ENCODE measurements at regions of chr22 and their contacts with region 1.

Region 1: DNA sequence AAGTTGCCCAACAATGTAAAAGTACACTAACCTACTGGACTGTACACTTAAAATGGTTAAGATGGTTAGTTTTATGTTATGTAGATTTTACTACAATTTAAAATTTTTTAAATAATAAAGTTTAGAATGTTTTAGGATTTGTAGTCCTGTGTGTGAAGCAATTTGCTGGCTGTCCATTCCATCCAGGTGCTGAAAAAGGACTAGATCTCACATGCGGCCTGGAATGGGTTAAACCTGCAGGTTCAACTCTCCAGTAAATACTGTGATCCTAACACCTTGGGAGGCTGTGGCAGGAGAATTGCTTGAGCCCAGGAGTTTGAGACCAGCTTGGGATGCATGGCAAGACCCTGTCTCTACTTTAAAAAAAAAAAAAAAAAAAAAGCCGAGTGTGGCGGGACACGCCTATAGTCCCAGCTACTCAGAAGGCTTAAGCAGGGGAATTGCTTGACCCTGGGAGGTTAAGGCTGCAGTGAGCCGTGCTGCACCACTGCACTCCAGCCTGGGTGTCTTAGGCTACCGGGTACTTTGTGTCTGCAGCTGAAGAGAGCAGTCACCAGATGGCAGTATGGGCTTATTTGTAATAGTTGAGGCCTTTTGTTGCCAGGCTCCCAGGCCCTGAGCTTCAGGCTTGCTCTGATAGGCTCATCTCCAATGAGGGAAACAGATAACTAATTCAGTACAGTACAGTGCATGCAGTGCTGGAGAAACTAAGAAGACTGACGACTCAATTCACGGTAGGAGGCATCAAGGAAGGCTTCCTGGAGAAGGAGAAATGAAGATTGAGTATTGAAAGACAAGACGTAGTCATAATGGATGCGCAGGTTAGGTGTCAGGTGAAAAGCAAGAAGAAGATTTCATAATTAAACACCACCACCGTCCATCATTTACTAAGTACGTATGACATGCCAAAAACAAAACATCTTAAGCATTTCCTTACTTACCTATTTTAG is 64.7 kb upstream of the ASPHD2 start:
- DNase-seq: peak; percentile 54
- ATAC-seq: peak; percentile 93
- H3K4me3 ChIP-seq: no peak overlapping the region
- H3K27ac ChIP-seq: no peak overlapping the region
- H3K4me1 ChIP-seq: peaks cover 4% of the 10 kb centered on the region
- H3K27me3 ChIP-seq: no peaks in the 10 kb centered on the region; the same call in 1 of the 2 replicates
- CTCF ChIP-seq: peak; percentile 74

Region 2: GRCh38 chr22:26236991-26237390 is 127.3 kb before region 1 on chr22:
- CTCF ChIA-PET with region 1: interaction called, 10 read pairs
- POLR2A ChIA-PET with region 1: no interaction called
- in situ Hi-C with region 1: no loop called
- intact Hi-C with region 1: no loop called
- DNase-seq: no peak
- ATAC-seq: no peak
- H3K4me3 ChIP-seq: no peak overlapping the region
- H3K27ac ChIP-seq: no peak overlapping the region
- H3K4me1 ChIP-seq: no peaks in the 10 kb centered on the region
- H3K27me3 ChIP-seq: peaks cover 4% of the 10 kb centered on the region; the same call in 1 of the 2 replicates
- CTCF ChIP-seq: no peak

Region 3: DNA sequence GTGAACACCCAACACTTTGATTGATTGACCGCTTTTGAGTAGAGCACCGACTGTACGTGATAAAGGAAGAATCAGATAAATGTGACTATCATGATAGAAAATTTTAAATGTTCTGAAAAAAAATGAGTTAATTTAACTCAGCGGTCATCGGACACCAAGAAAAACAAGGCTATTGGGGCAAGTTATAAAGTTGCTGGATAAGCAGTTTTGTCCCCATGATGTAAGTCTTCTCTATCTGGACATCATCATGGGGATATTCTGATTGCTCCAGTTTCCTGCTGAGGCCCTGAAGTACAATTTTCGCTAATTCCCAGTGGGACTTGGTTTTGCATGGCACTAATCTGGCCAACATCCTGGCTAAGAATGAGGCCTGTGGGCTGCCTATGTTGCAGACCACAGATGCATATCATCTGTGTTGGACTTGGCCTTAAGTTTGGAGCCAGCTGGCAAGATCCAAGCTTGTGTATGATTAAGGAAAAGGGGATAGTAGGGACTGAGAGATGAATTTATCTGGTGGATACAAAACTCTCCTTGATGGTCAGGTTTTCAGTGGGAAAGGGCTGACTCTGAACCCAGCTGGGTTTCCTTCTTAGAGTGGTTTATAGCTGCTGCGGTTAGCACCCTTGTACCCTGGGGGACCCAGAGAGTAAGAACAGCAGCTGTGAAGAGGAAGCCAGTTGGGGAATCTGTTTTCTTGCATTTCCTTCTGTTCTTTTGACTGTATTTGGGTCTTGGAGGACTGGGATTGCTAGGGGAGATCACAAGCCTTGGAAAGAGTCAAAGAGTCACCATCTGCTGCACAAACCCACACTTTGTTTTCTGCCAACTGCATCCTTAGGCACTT is 76.7 kb before region 1 on chr22:
- CTCF ChIA-PET with region 1: interaction called, 10 read pairs
- POLR2A ChIA-PET with region 1: no interaction called
- in situ Hi-C with region 1: no loop called
- intact Hi-C with region 1: no loop called
- DNase-seq: no peak
- ATAC-seq: no peak
- H3K4me3 ChIP-seq: no peak overlapping the region
- H3K27ac ChIP-seq: no peak overlapping the region
- H3K4me1 ChIP-seq: no peaks in the 10 kb centered on the region
- H3K27me3 ChIP-seq: no peaks in the 10 kb centered on the region; the same call in 1 of the 2 replicates
- CTCF ChIP-seq: no peak

Region 4: DNA sequence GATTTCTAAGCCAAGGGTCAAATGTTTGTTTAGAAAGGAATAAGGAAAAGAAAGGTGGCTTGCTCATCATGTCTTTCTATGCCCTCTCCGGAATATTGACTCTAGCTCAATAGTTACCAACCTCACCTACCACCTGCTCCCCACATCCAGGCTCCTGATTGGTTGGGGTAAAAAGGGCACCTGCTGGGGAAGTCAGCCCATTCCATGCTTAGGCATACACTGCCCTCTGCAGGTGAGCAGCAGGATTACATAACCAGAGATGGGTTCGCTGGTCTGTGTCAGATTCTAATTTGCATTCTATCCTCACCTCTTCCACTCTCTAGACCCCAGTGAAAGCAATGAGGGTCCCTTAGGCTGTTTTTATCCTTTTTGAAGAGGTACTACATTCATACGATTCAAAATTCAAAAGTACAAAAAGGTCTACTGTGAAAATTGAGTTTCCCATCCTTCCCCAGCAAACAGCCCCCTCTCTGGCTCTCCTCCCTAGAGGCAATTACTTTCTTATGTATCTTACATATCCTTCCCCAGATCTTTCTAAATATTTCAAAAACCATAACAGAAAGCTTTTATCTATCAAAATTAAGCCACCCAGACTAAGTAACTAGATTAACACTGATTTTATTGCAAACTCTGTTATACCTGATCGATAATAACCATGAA is 33.2 kb before region 1 on chr22:
- CTCF ChIA-PET with region 1: no interaction called
- POLR2A ChIA-PET with region 1: no interaction called
- in situ Hi-C with region 1: no loop called
- intact Hi-C with region 1: no loop called
- DNase-seq: peak; percentile 51
- ATAC-seq: peak; percentile 78
- H3K4me3 ChIP-seq: no peak overlapping the region
- H3K27ac ChIP-seq: no peak overlapping the region
- H3K4me1 ChIP-seq: no peaks in the 10 kb centered on the region
- H3K27me3 ChIP-seq: no peaks in the 10 kb centered on the region; the same call in 1 of the 2 replicates
- CTCF ChIP-seq: peak; percentile 84

Region 5: DNA sequence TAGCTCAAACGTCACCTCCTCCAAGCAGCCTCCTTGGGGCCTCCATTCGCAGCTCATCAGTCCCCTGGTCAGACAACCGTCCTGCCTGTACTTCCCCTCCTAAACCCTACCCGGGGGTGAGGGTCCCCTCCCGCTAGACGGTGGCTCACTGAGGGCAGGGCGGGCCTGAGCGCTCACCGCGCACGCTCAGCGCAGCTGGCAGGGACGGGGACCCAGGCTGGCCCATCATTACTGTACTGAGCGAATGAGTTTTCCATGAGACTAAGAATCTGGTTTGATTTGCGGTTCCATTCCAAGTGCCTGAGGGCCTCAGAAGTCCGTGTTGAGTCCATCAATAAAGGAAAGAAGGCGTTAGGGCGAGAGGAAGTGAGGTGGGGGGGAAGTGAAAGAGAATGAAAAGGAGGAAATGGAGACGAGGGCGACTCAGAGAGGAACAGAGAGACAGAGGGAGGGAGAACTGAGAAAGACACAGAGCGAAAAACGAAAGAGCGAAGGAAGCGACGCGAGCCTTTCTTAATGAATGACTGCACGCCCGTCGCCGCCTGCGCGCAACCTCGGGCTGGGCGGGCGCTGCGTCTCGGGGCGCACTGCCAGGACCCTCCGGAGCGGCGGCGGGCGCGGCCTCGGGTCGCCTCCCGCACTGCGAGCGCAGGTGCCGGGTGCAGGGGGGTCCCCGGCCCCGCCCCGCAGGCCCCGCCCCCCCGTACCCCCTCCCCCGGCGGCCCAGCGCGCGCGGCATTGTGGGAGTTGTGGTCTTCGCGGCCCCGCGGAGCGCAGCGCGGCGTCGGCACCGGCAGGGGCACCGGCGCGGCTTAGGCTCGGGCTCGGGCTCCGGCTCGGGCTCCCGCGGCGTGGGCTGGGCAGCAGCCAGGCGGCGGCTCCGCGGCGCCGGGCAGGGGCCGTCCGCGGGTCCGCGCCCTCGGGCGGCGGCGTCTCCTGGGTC is 64.4 kb after region 1 on chr22 and contains the start of gene ASPHD2:
- CTCF ChIA-PET with region 1: no interaction called
- POLR2A ChIA-PET with region 1: no interaction called
- in situ Hi-C with region 1: no loop called
- intact Hi-C with region 1: no loop called
- DNase-seq: no peak
- ATAC-seq: peak; percentile 92
- H3K4me3 ChIP-seq: peak within 1 kb of the TSS; percentile 57 to 80
- H3K27ac ChIP-seq: peak within 1 kb of the TSS; percentile 48
- H3K4me1 ChIP-seq: no peaks in the 10 kb centered on the region
- H3K27me3 ChIP-seq: peaks cover 8% of the 10 kb centered on the region
- CTCF ChIP-seq: no peak
- total RNA-seq, gene ASPHD2: 0.15 TPM

Region 6: GRCh38 chr22:26439559-26439958 is 75.2 kb after region 1 on chr22:
- CTCF ChIA-PET with region 1: interaction called, 13 read pairs
- POLR2A ChIA-PET with region 1: no interaction called
- in situ Hi-C with region 1: no loop called
- intact Hi-C with region 1: no loop called
- DNase-seq: no peak
- ATAC-seq: no peak
- H3K4me3 ChIP-seq: no peak overlapping the region
- H3K27ac ChIP-seq: no peak overlapping the region
- H3K4me1 ChIP-seq: no peaks in the 10 kb centered on the region
- H3K27me3 ChIP-seq: no peaks in the 10 kb centered on the region
- CTCF ChIP-seq: no peak

Region 7: DNA sequence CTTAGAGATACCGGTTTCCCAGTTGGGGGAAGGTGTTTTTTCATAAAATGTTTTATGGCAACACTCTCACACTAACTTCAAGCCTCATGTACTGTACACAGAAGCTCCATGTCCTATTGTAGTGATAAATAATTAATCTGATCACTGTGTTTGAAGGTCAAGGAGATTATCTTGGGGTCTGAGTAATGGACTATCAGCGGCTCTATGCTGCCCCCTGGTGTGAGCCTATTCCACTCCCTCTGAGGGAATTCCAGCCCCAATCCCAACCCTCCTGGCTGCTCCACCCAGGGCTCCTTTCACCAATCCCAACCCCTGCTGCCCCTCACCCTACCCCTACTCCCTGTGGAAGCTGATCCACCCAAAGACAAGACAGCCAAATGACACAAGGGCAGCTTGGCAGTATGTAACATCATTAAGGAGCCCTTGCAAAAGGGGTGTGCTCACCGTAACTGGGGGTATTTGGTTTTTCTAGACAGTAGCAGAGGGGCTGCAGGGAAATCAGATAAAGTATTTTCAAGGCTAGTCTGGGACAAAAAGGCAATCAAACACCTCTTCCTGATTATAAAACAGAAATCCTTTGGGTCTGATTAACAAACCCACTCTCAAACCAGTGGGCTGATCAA is 97.0 kb after region 1 on chr22:
- CTCF ChIA-PET with region 1: no interaction called
- POLR2A ChIA-PET with region 1: no interaction called
- in situ Hi-C with region 1: no loop called
- intact Hi-C with region 1: loop called (anchors 10 kb)
- DNase-seq: no peak
- ATAC-seq: peak; percentile 88
- H3K4me3 ChIP-seq: no peak overlapping the region
- H3K27ac ChIP-seq: no peak overlapping the region
- H3K4me1 ChIP-seq: no peaks in the 10 kb centered on the region
- H3K27me3 ChIP-seq: no peaks in the 10 kb centered on the region
- CTCF ChIP-seq: peak; percentile 81